Naive thymus-derived CD4-positive, alpha-beta T cell (primary cell): ENCODE measurements at regions of chr7 and their contacts with region 1.

Region 1: DNA sequence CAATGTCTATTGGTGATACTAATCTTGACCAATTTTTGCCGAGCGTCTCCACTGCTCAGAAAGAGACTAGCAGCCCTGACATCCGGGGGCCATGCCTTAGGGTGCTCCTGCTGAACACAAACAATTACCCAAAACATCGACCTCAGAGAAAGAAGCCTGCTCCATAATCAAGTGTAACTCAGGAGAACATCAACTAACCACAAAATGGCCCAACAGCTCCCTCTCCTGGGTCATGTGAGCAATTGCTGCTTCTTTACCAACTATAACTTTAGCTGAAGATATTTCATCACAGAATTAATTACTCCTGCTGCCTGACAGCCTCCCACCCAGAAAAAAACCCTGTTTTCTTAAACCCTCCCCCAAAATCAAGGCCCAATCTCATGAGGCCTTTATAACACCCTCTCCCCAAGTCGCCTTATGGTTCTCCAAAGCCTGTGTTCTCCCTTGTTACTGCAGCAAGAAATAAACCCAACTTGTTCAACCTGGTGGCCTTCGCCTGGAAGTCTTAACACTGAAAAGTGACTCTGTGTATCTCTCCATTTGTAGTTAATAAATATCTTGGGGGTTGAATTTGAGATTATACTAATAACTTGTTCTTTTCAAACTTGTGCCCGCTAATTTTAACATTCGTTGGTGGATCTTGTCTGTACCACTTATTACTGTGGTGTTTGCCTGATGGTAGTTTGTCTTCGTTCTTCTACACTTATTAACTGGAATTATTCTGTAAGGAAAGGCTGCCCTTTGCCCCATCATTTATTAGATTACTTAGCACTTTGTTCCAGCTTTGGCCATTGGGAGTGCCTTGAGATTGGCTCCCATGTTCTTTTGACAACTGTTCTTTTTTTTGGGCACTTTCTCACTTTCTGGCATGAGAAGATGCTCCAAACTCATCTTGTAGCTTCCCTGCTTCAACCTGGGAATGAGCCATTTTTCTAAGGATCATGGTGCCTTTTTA is 21.2 kb upstream of the RAMP3 start:
- DNase-seq: peak; percentile 38 to 81 (median 70)
- ATAC-seq: peak; percentile 91
- H3K4me3 ChIP-seq: no peak overlapping the region
- H3K4me3 Mint-ChIP-seq: peak overlapping the region in 1 of 10 donors; percentile 21
- H3K27ac ChIP-seq: no peak overlapping the region
- H3K27ac Mint-ChIP-seq: peak overlapping the region in 8 of 9 donors; percentile 0 to 84 (median 48)
- H3K4me1 ChIP-seq: peaks cover 0 to 3% of the 10 kb centered on the region in 2 donors
- H3K4me1 Mint-ChIP-seq: peaks cover 6 to 27% (median 10%) of the 10 kb centered on the region in 7 donors
- H3K27me3 ChIP-seq: no peaks in the 10 kb centered on the region
- H3K27me3 Mint-ChIP-seq: peaks cover 0 to 2% (median 0%) of the 10 kb centered on the region in 5 donors

Region 2: GRCh38 chr7:44587843-44588711 is 548.3 kb before region 1 on chr7:
- CTCF ChIA-PET with region 1: interaction called, 4 read pairs
- POLR2A ChIA-PET with region 1: no interaction called
- intact Hi-C with region 1: loop called (anchors 1 to 2 kb)
- DNase-seq: peak in 7 of 9 donors; percentile 35 to 63 (median 60)
- ATAC-seq: peak; percentile 90
- H3K4me3 ChIP-seq: no peak overlapping the region
- H3K4me3 Mint-ChIP-seq: no peak overlapping the region
- H3K27ac ChIP-seq: no peak overlapping the region
- H3K27ac Mint-ChIP-seq: peak overlapping the region in 3 of 9 donors; percentile 6 to 71 (median 25)
- H3K4me1 ChIP-seq: peaks cover 0 to 4% of the 10 kb centered on the region in 2 donors
- H3K4me1 Mint-ChIP-seq: peaks cover 0 to 18% (median 6%) of the 10 kb centered on the region in 7 donors
- H3K27me3 ChIP-seq: no peaks in the 10 kb centered on the region
- H3K27me3 Mint-ChIP-seq: peaks cover 0 to 9% (median 0%) of the 10 kb centered on the region in 5 donors

Region 3: GRCh38 chr7:44964384-44964825 is 172.0 kb before region 1 on chr7:
- CTCF ChIA-PET with region 1: no interaction called
- POLR2A ChIA-PET with region 1: no interaction called
- intact Hi-C with region 1: loop called in 1 of 2 experiments (anchors 2 kb)
- DNase-seq: no peak
- ATAC-seq: peak; percentile 6
- H3K4me3 ChIP-seq: no peak overlapping the region
- H3K4me3 Mint-ChIP-seq: no peak overlapping the region
- H3K27ac ChIP-seq: no peak overlapping the region
- H3K27ac Mint-ChIP-seq: peak overlapping the region in 3 of 9 donors; percentile 21 to 88 (median 36)
- H3K4me1 ChIP-seq: peaks cover 0 to 11% of the 10 kb centered on the region in 2 donors
- H3K4me1 Mint-ChIP-seq: peaks cover 0 to 21% (median 5%) of the 10 kb centered on the region in 7 donors
- H3K27me3 ChIP-seq: no peaks in the 10 kb centered on the region
- H3K27me3 Mint-ChIP-seq: no peaks in the 10 kb centered on the region

Region 4: DNA sequence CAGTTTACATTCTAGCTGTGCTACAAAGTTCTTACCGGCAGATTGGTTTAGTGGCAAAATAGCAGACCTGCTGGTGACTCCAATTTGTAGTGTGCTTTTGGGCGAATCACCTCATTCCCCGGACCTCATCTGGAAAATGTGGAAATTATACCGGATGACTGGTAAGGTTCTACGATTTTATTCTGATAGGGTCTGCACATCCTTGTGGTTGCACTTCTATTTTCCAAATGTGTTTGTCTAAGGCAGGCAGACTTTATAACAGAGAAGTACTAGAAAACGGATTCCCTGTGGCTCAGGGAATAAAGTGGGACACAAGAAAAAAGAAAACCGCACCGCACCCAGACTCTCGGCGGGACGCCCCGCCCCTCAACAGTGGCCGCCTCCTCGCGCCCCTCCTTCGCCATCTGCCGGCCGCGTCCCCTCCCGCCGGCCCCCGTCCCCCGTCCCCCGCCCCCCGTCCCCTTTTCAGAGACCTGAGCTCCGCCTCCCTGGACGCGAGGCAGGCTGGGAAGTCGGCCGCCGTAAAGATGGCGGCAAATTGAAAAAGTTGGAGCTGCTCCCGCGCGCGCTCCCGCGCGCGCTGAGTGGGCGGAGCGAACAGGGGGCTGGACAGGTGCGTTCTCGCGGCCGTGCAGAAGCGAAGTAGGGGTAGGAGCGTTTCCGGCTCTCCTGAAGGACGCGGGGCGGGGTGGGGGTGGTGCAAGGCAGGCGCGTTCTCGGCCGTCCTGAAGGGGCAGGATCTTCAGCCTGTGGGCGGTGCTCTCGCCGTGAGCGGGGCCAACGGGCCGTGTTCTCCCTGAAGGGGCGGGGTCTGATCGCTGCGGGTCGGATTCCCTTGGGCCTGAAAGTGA is 136.9 kb before region 1 on chr7:
- CTCF ChIA-PET with region 1: interaction called, 6 read pairs
- POLR2A ChIA-PET with region 1: interaction called, 7 read pairs
- intact Hi-C with region 1: loop called (anchors 1 kb)
- DNase-seq: peak; percentile 92 to 99 (median 98)
- ATAC-seq: peak; percentile 93
- H3K4me3 ChIP-seq: peak overlapping the region; percentile 83
- H3K4me3 Mint-ChIP-seq: peak overlapping the region; percentile 85 to 100 (median 96)
- H3K27ac ChIP-seq: peak overlapping the region; percentile 80
- H3K27ac Mint-ChIP-seq: peak overlapping the region; percentile 82 to 99 (median 96)
- H3K4me1 ChIP-seq: peaks cover 18 to 34% of the 10 kb centered on the region in 2 donors
- H3K4me1 Mint-ChIP-seq: peaks cover 19 to 59% (median 49%) of the 10 kb centered on the region in 7 donors
- H3K27me3 ChIP-seq: no peaks in the 10 kb centered on the region
- H3K27me3 Mint-ChIP-seq: no peaks in the 10 kb centered on the region

Region 5: DNA sequence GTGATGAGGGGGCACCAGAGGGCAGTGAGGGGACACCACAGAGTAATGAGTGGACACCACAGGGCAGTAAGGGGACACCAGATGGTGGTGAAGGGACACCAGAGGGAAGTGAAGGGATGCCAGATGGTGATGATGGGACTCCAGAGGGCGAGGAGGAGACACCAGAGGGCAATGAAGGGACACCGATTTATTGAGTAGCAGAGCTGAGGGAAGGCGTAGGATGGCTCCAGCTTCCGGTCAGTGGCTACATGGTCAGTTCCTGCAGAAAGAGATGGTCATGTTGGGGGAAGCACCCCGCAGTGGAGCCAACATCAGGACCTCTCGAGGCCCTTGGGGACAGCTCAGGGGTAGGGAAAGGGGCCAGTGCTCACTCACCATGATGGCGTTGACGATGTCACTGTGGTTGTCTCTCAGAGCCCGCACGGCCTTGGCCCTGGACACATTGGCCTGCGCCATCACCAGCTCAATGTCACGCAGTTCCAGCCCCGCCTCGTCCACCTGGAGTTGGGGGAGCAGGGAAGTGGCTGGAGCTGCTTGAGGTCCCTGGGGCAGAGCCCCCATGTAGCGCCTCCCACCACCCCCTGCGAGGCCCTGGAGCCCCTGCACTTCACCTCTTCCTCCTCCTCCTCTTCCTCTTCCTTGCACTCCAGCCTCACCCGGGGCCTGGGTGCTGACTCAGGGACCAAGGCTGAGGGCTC is 56.0 kb before region 1 on chr7:
- CTCF ChIA-PET with region 1: interaction called, 3 read pairs
- POLR2A ChIA-PET with region 1: interaction called, 3 read pairs
- intact Hi-C with region 1: loop called (anchors 1 kb)
- DNase-seq: no peak
- ATAC-seq: peak; percentile 30
- H3K4me3 ChIP-seq: no peak overlapping the region
- H3K4me3 Mint-ChIP-seq: no peak overlapping the region
- H3K27ac ChIP-seq: no peak overlapping the region
- H3K27ac Mint-ChIP-seq: peak overlapping the region; percentile 17 to 84 (median 68)
- H3K4me1 ChIP-seq: no peaks in the 10 kb centered on the region
- H3K4me1 Mint-ChIP-seq: peaks cover 0 to 19% (median 3%) of the 10 kb centered on the region in 7 donors
- H3K27me3 ChIP-seq: no peaks in the 10 kb centered on the region
- H3K27me3 Mint-ChIP-seq: no peaks in the 10 kb centered on the region